ENCODE measurements at regions of chr19 and their contacts with region 1.

Region 1: DNA sequence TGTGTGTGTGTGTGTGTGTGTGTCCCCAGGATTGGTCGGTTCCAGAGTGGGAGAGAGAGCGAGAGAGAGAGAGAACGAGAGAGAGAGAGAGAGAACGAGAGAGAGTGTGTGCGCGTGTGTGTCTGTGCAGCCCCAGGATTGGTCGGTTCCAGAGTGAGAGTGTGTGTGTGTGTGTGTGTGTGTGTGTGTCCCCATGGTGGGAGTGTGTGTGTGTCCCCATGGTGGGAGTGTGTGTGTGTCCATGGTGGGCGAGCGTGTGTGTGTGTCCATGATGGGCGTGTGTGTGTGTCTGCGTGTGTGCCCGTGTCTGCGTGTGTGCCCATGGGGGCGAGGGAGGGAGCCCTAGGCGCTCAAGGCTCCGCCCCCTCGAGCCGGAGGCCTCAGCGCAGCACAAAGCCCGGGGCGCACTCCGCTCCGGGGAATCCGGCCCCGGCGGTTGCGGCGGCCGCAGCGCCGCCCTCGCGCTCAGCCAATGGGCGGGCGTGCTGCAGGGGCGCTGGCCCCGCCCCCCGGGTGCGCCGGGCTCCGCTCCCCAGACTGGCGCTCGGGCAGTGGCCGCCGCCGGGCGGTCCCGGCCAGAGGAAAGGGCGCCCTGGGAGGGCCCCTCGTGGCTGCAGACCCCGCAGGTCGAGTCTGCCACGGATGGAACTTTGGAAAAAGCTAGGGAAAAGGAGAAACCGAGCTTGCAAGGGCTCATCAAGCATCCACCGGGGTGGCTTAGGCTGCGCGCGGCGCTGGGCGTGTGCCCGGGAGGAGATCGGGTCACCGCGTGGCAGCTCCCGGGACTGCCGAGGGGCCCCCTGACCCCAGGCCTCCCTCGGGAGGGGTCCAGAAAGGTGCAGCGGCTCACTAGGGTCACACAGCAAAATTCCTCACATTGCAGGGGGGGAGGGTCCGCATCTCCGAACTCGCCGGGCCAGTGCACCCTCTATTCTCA is 96.2 kb downstream of the INSR start:
- DNase-seq: peak; percentile 98
- ATAC-seq: peak; percentile 83
- H3K4me3 ChIP-seq: peak overlapping the region; percentile 88
- H3K27ac ChIP-seq: peak overlapping the region; percentile 44
- H3K4me1 ChIP-seq: peaks cover 7% of the 10 kb centered on the region; the same call in 1 of the 2 replicates
- H3K27me3 ChIP-seq: no peaks in the 10 kb centered on the region
- CTCF ChIP-seq: no peak

Region 2: GRCh38 chr19:7069042-7069903 is 128.8 kb before region 1 on chr19 and contains the start of gene ZNF557:
- CTCF ChIA-PET with region 1: no interaction called
- POLR2A ChIA-PET with region 1: interaction called, 21 read pairs
- intact Hi-C with region 1: no loop called
- DNase-seq: peak; percentile 98
- ATAC-seq: peak; percentile 99
- H3K4me3 ChIP-seq: peak within 1 kb of the TSS; percentile 96
- H3K27ac ChIP-seq: peak within 1 kb of the TSS; percentile 52
- H3K4me1 ChIP-seq: peaks cover 6% of the 10 kb centered on the region; the same call in 1 of the 2 replicates
- H3K27me3 ChIP-seq: no peaks in the 10 kb centered on the region
- CTCF ChIP-seq: no peak
- total RNA-seq, gene ZNF557: 12.9 and 13.7 TPM in 2 replicates

Region 3: GRCh38 chr19:7083076-7083956 is 114.7 kb before region 1 on chr19:
- CTCF ChIA-PET with region 1: no interaction called
- POLR2A ChIA-PET with region 1: no interaction called
- intact Hi-C with region 1: no loop called
- DNase-seq: peak; percentile 24
- ATAC-seq: no peak
- H3K4me3 ChIP-seq: peak overlapping the region; percentile 26; the same call in 1 of the 2 replicates
- H3K27ac ChIP-seq: no peak overlapping the region
- H3K4me1 ChIP-seq: no peaks in the 10 kb centered on the region
- H3K27me3 ChIP-seq: no peaks in the 10 kb centered on the region
- CTCF ChIP-seq: no peak

Region 4: GRCh38 chr19:7250057-7250596 is 52.1 kb after region 1 on chr19:
- CTCF ChIA-PET with region 1: interaction called, 5 read pairs
- POLR2A ChIA-PET with region 1: interaction called, 28 read pairs
- intact Hi-C with region 1: no loop called
- DNase-seq: no peak
- ATAC-seq: no peak
- H3K4me3 ChIP-seq: no peak overlapping the region
- H3K27ac ChIP-seq: no peak overlapping the region
- H3K4me1 ChIP-seq: no peaks in the 10 kb centered on the region
- H3K27me3 ChIP-seq: no peaks in the 10 kb centered on the region
- CTCF ChIP-seq: no peak

Region 5: DNA sequence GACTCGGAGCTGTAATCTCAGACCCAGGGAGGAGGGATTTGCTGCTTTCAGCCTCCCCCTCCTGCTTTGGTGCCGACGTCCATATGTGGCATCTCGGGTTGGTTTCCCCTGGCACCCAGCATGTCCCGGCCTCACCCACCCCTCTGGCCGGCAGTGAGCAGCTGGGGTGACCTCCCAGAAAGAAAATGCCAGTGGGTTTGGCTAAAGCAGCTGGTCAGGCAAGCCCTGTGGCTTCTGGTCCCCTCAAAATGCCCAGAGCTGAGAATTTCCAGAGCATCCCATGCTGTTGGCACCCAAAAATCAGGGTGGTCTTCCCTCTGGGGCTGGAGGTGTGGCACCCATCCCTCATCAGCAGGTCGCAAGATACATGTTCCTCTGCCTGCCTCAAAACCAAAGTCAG is 62.2 kb after region 1 on chr19:
- CTCF ChIA-PET with region 1: no interaction called
- POLR2A ChIA-PET with region 1: no interaction called
- intact Hi-C with region 1: no loop called
- DNase-seq: no peak
- ATAC-seq: no peak
- H3K4me3 ChIP-seq: no peak overlapping the region
- H3K27ac ChIP-seq: no peak overlapping the region
- H3K4me1 ChIP-seq: peaks cover 7% of the 10 kb centered on the region; the same call in 1 of the 2 replicates
- H3K27me3 ChIP-seq: no peaks in the 10 kb centered on the region
- CTCF ChIP-seq: no peak

Region 6: DNA sequence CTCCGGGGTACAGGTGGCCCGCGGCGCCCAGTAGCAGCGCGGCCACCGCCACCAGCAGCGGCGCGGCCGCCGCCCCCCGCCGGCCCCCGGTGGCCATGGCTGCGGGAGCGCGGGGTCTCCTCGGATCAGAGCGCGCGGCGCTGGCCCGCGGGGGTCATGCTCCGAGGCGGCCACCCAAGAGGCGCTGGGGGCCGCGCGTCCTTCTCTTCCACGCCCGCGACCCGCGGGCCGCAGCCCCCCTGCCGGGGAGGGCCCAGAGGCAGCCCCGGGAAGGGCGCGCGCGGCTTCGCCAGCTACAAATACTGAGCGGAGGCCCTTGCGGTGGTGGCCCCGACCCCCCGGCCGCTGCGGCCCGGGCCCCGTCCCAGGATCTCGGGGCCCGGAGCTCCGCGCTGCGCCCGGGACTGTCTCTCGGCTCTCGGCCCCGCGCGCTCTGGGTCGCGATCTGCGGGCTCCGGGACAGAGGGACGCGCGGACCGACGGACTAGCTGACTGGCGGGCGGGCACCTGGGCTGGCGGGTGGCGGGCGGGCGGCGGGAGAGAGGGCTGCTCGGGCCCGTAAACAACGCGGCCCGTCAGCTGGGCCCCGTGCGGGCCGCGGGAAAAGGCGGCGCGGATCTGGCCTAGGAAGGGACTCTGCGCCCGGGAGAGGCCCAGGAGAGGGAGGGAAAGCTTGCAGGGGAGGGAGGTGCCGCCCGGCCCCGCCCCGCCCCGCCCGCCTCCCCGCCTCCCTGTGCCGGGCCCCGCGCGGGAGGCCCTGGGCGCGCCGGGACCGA is 96.0 kb after region 1 on chr19 and contains the start of gene INSR:
- CTCF ChIA-PET with region 1: no interaction called
- POLR2A ChIA-PET with region 1: no interaction called
- intact Hi-C with region 1: loop called (anchors 1 kb)
- DNase-seq: peak; percentile 94
- ATAC-seq: peak; percentile 91
- H3K4me3 ChIP-seq: peak within 1 kb of the TSS; percentile 70
- H3K27ac ChIP-seq: no peak within 1 kb of the TSS
- H3K4me1 ChIP-seq: peaks cover 16% of the 10 kb centered on the region
- H3K27me3 ChIP-seq: peaks cover 6% of the 10 kb centered on the region; the same call in 1 of the 2 replicates
- CTCF ChIP-seq: no peak
- total RNA-seq, gene INSR: 13.7 and 41.5 TPM in 2 replicates

Region 7: GRCh38 chr19:7340959-7341837 is 143.2 kb after region 1 on chr19:
- CTCF ChIA-PET with region 1: interaction called, 3 read pairs
- POLR2A ChIA-PET with region 1: no interaction called
- intact Hi-C with region 1: loop called (anchors 5 kb)
- DNase-seq: peak; percentile 92
- ATAC-seq: peak; percentile 59
- H3K4me3 ChIP-seq: peak overlapping the region; percentile 6; the same call in 1 of the 2 replicates
- H3K27ac ChIP-seq: no peak overlapping the region
- H3K4me1 ChIP-seq: 0 out of 2 replicates have a peak, but pooled peaks cover 7% of the 10 kb centered on the region
- H3K27me3 ChIP-seq: no peaks in the 10 kb centered on the region; the same call in 1 of the 2 replicates
- CTCF ChIP-seq: peak; percentile 97